PC-3 (cell line): ENCODE measurements at regions of chr5 and their contacts with region 1.

Region 1: DNA sequence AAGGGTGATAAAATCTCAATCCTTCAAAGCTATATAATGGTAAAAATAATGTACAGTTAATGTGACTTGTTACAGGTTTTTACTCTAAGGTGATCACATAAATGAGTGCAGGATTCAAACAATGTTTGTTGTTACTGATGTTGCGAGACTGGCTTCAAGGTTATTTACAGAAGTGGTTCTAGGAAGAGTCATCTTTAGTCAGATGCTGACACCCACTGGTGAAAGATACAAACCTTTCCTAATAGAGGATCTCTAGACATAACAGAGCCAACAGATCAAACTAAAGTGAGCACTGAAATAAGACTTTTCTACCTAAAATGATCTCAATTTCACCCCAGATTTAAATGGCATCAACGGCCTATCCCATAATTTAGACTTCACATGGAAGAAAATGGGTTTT is 20.2 kb downstream of the ARSB start:
- DNase-seq: peak; percentile 64
- ATAC-seq: peak; percentile 82
- H3K4me3 ChIP-seq: no peak overlapping the region
- H3K27ac ChIP-seq: no peak overlapping the region
- H3K4me1 ChIP-seq: no peaks in the 10 kb centered on the region
- H3K27me3 ChIP-seq: no peaks in the 10 kb centered on the region
- CTCF ChIP-seq: peak; percentile 68

Region 2: DNA sequence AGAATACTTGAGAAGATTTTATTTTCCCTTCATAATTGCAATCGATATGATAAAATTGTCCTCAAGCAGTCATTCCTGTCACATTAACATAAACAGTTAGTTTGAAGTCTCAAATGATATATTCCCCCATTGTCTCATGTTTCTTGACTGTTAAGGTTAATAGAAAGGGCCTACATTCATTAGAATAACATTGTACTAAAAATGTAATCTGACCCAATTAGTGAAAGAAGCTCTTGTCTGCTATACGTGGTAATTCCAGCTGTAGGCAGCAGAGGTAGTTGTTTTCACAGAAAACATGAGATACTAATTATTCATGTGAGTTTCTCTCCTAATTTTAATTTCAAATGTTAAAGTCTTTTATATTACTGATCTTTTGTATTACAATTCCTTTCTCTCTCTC is 644.5 kb before region 1 on chr5:
- CTCF ChIA-PET with region 1: no interaction called
- POLR2A ChIA-PET with region 1: no interaction called
- intact Hi-C with region 1: loop called (anchors 1 kb)
- DNase-seq: peak; percentile 42
- ATAC-seq: 0 out of 2 replicates have a peak, but pooled peaks have one; percentile 27
- H3K4me3 ChIP-seq: no peak overlapping the region
- H3K27ac ChIP-seq: no peak overlapping the region
- H3K4me1 ChIP-seq: no peaks in the 10 kb centered on the region
- H3K27me3 ChIP-seq: no peaks in the 10 kb centered on the region
- CTCF ChIP-seq: peak; percentile 67

Region 3: GRCh38 chr5:78467752-78468357 is 497.0 kb before region 1 on chr5:
- CTCF ChIA-PET with region 1: no interaction called
- POLR2A ChIA-PET with region 1: no interaction called
- intact Hi-C with region 1: loop called (anchors 5 kb)
- DNase-seq: peak; percentile 54
- ATAC-seq: peak; percentile 73
- H3K4me3 ChIP-seq: no peak overlapping the region
- H3K27ac ChIP-seq: no peak overlapping the region
- H3K4me1 ChIP-seq: no peaks in the 10 kb centered on the region; the same call in 1 of the 2 replicates
- H3K27me3 ChIP-seq: no peaks in the 10 kb centered on the region
- CTCF ChIP-seq: peak; percentile 77

Region 4: GRCh38 chr5:78648359-78649210 is 316.3 kb before region 1 on chr5 and contains the start of gene LHFPL2:
- CTCF ChIA-PET with region 1: no interaction called
- POLR2A ChIA-PET with region 1: no interaction called
- intact Hi-C with region 1: loop called (anchors 5 kb)
- DNase-seq: peak; percentile 59
- ATAC-seq: peak; percentile 74
- H3K4me3 ChIP-seq: peak within 1 kb of the TSS; percentile 77
- H3K27ac ChIP-seq: peak within 1 kb of the TSS; percentile 70
- H3K4me1 ChIP-seq: peaks cover 26% of the 10 kb centered on the region
- H3K27me3 ChIP-seq: no peaks in the 10 kb centered on the region
- CTCF ChIP-seq: no peak
- total RNA-seq, gene LHFPL2: 19.4 and 21.7 TPM in 2 replicates

Region 5: DNA sequence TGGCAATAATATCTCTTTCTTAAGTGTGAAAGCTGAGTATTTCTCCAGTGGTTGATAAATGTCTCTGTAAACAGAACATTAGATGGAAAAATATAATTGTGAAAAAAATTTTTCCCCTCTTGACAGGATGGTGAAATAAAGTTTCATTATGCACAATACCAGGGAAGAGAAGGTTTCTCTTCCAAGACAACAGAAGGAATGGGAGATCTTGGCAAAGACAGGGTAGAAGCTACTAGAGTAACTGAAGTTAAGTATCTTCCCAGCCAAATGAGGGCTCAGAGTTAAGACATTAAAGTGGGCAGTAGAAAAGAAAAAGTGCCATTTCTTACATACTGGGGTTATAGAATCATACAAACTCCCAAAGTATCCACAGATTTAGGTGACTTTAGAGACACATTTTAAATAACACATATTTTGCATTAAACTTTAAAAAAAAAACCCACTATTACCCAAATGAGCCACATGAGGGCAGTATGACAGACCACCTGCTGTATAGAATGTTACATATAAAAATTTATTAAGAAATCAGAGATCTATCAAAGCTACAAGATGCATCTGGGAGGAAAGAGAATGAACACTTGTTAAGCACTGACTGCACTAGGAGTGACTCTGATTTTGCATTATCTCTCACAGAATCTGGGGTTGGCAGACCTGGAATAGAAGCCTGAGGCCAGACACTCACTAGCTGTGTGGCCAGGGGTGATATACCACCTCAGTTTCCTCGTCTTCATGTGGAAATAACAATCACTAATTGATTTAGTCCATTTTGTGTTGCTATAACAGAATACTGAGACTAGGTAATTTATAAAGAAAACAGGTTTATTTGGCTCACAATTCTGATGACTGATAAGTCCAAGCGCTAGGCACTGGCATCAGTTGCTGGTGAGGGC is 78.3 kb before region 1 on chr5:
- CTCF ChIA-PET with region 1: no interaction called
- POLR2A ChIA-PET with region 1: no interaction called
- intact Hi-C with region 1: loop called (anchors 5 kb)
- DNase-seq: peak; percentile 32
- ATAC-seq: no peak
- H3K4me3 ChIP-seq: no peak overlapping the region
- H3K27ac ChIP-seq: no peak overlapping the region
- H3K4me1 ChIP-seq: 0 out of 2 replicates have a peak, but pooled peaks cover 5% of the 10 kb centered on the region
- H3K27me3 ChIP-seq: no peaks in the 10 kb centered on the region
- CTCF ChIP-seq: peak; percentile 66

Region 6: GRCh38 chr5:78899922-78900362 is 64.9 kb before region 1 on chr5:
- CTCF ChIA-PET with region 1: no interaction called
- POLR2A ChIA-PET with region 1: no interaction called
- intact Hi-C with region 1: loop called (anchors 5 kb)
- DNase-seq: peak; percentile 56
- ATAC-seq: peak; percentile 46; the same call in 1 of the 2 replicates
- H3K4me3 ChIP-seq: no peak overlapping the region
- H3K27ac ChIP-seq: no peak overlapping the region
- H3K4me1 ChIP-seq: no peaks in the 10 kb centered on the region
- H3K27me3 ChIP-seq: no peaks in the 10 kb centered on the region
- CTCF ChIP-seq: peak; percentile 79

Region 7: GRCh38 chr5:79200573-79201183 is 235.8 kb after region 1 on chr5:
- CTCF ChIA-PET with region 1: no interaction called
- POLR2A ChIA-PET with region 1: no interaction called
- intact Hi-C with region 1: no loop called
- DNase-seq: peak; percentile 52
- ATAC-seq: peak; percentile 68
- H3K4me3 ChIP-seq: no peak overlapping the region
- H3K27ac ChIP-seq: no peak overlapping the region
- H3K4me1 ChIP-seq: peaks cover 13% of the 10 kb centered on the region
- H3K27me3 ChIP-seq: no peaks in the 10 kb centered on the region
- CTCF ChIP-seq: peak; percentile 72